ENCODE measurements at regions of chr1 and their contacts with region 1.

Region 1: GRCh38 chr1:186680245-186681061 is at the start of gene PTGS2:
- DNase-seq: peak; percentile 55
- ATAC-seq: peak; percentile 92
- H3K4me3 ChIP-seq: peak within 1 kb of the TSS; percentile 65
- H3K27ac ChIP-seq: peak within 1 kb of the TSS; percentile 14; the same call in 1 of the 2 replicates
- H3K4me1 ChIP-seq: no peaks in the 10 kb centered on the region
- H3K27me3 ChIP-seq: no peaks in the 10 kb centered on the region
- CTCF ChIP-seq: peak; percentile 47; the same call in 1 of the 2 replicates
- total RNA-seq, gene PTGS2: 4.9 and 7.9 TPM in 2 replicates

Region 2: GRCh38 chr1:186550832-186551231 is 129.6 kb before region 1 on chr1:
- CTCF ChIA-PET with region 1: no interaction called
- POLR2A ChIA-PET with region 1: no interaction called
- intact Hi-C with region 1: no loop called
- DNase-seq: no peak
- ATAC-seq: no peak
- H3K4me3 ChIP-seq: no peak overlapping the region
- H3K27ac ChIP-seq: no peak overlapping the region
- H3K4me1 ChIP-seq: no peaks in the 10 kb centered on the region
- H3K27me3 ChIP-seq: no peaks in the 10 kb centered on the region
- CTCF ChIP-seq: no peak

Region 3: DNA sequence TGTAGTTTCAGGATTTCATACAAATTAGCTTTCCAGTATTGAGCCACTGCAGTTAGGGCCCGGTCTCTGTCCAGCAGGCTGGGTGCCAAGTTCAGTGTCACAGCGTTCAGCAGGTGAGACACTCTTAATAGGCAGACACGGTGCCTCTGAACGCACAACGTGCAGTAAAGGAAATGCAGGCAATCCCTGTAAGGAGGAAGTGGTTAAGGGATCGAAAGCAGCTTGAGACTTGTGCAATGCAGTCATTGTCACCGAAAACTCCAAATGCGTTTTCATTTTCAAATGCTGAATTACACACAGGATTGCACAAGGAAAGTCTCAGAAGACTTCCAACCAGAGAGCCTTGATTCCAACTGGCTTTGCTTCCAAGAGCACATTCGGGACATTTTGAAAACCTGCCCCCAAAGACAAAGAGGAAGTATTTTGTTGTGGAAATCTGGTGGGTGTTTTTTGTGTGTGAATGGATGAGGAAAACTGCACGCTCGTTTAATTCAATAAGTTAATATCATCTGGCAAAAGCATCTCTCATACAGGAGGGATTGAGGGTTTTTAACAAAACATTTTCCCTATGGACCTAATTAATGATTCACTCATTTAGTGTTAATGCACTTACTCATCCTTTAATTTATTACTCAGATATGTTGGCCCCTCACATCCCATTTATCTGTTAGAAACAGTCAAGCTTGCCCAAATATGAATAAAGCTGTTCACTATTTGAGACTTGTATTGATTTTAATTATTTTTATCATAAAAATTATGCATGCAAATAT is 61.9 kb before region 1 on chr1:
- CTCF ChIA-PET with region 1: no interaction called
- POLR2A ChIA-PET with region 1: no interaction called
- intact Hi-C with region 1: loop called (anchors 2 kb)
- DNase-seq: peak; percentile 61
- ATAC-seq: peak; percentile 70
- H3K4me3 ChIP-seq: peak overlapping the region; percentile 68
- H3K27ac ChIP-seq: peak overlapping the region; percentile 60
- H3K4me1 ChIP-seq: peaks cover 6% of the 10 kb centered on the region
- H3K27me3 ChIP-seq: no peaks in the 10 kb centered on the region
- CTCF ChIP-seq: no peak

Region 4: GRCh38 chr1:186740324-186740723 is 59.9 kb after region 1 on chr1:
- CTCF ChIA-PET with region 1: no interaction called
- POLR2A ChIA-PET with region 1: no interaction called
- intact Hi-C with region 1: no loop called
- DNase-seq: no peak
- ATAC-seq: no peak
- H3K4me3 ChIP-seq: no peak overlapping the region
- H3K27ac ChIP-seq: no peak overlapping the region
- H3K4me1 ChIP-seq: peaks cover 7% of the 10 kb centered on the region; the same call in 1 of the 2 replicates
- H3K27me3 ChIP-seq: no peaks in the 10 kb centered on the region
- CTCF ChIP-seq: no peak

Region 5: GRCh38 chr1:187244623-187245022 is 564.2 kb after region 1 on chr1:
- CTCF ChIA-PET with region 1: no interaction called
- POLR2A ChIA-PET with region 1: no interaction called
- intact Hi-C with region 1: no loop called
- DNase-seq: peak; percentile 56
- ATAC-seq: peak; percentile 40; the same call in 1 of the 2 replicates
- H3K4me3 ChIP-seq: no peak overlapping the region
- H3K27ac ChIP-seq: no peak overlapping the region
- H3K4me1 ChIP-seq: no peaks in the 10 kb centered on the region
- H3K27me3 ChIP-seq: no peaks in the 10 kb centered on the region
- CTCF ChIP-seq: no peak

Measured in PC-3 (cell line).